Endothelial cell of umbilical vein (primary cell): ENCODE measurements at regions of chr3 and their contacts with region 1.

Region 1: DNA sequence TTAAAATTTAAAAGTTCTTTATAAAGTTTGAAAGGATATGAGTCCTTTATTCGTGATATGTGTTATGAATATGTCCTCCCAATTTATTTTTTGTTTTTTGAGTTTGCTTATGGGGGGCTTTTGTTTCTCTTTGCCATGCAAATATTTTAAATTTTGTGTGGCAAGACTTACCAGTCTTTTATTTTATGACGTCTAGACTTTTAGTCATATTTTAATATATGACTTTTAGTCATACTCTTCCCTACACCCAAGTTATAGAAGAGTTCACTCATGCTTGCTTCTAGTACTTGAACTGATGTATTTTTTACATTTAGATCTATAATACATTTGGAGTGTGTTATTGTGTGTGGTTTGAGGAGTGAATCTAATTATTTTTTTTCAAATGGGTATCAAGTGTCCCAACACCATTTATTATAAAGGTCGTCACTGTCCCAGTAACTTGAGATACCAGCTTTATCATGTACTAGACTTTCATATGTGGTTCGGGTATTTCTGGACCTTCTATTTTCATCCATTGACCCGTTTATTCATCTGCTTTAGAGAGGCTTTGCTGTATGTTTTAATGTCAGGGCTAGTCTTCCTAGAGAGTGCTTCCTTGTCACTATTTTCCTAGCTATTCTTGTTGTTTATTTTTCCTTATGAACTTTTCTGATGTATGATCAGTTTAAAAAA is 755 bp downstream of the PARP15 start:
- DNase-seq: no peak
- H3K4me3 ChIP-seq: peak overlapping the region; percentile 39 to 56 (median 51)
- H3K27ac ChIP-seq: no peak overlapping the region
- H3K4me1 ChIP-seq: peaks cover 7% of the 10 kb centered on the region
- H3K27me3 ChIP-seq: no peaks in the 10 kb centered on the region
- CTCF ChIP-seq: no peak
- POLR2A ChIP-seq: no peak

Region 2: DNA sequence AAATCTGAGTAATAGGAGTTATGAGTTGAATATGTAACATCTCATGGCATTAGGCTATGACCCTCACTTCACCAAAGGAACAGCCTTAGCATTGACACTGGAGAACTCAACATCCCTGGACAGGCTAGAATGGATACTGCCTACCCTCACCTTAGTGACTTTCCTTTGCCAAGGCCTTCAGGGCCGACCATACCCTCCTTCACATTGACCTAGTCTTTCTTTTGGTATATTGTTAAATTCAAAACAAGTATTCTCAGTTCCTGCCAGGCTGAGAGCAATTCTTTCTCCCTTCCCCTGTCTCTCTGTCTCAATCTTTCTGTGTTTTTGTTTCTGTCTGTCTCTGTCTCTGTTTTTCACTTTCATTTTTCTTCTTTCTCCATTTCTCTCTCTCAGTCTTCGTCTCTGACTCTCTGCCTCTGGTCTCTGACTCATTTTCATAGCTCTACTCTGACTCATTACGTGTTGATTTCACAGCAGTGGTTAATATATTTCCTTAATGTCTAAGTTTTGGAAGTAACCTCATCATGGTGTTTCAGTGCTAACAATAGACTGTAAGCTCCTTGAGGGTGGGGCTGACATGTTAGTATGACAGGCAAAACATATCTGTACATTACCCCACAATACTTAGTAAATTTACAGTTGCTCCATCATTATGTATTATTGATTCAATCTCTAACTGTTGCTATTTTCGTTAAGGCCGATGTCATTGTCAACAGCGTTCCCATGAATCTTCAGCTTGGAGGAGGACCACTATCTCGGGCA is 31.8 kb after region 1 on chr3:
- CTCF ChIA-PET with region 1: no interaction called
- POLR2A ChIA-PET with region 1: interaction called, 13 read pairs
- dilution Hi-C with region 1: no loop called
- intact Hi-C with region 1: no loop called
- DNase-seq: peak; percentile 67
- H3K4me3 ChIP-seq: no peak overlapping the region
- H3K27ac ChIP-seq: peak overlapping the region; percentile 52
- H3K4me1 ChIP-seq: peaks cover 3% of the 10 kb centered on the region
- H3K27me3 ChIP-seq: peaks cover 0 to 4% of the 10 kb centered on the region in 2 experiments
- CTCF ChIP-seq: no peak
- POLR2A ChIP-seq: no peak